ENCODE measurements at regions of chr13 and their contacts with region 1.

Region 1: GRCh38 chr13:91557328-91558090 is 159.1 kb downstream of the GPC5 start:
- DNase-seq: no peak
- ATAC-seq: no peak
- H3K4me3 ChIP-seq: no peak overlapping the region
- H3K27ac ChIP-seq: no peak overlapping the region
- H3K4me1 ChIP-seq: no peaks in the 10 kb centered on the region
- H3K27me3 ChIP-seq: no peaks in the 10 kb centered on the region
- CTCF ChIP-seq: no peak
- EP300 ChIP-seq: no peak
- POLR2A ChIP-seq: no peak
- RAD21 ChIP-seq: no peak

Region 2: DNA sequence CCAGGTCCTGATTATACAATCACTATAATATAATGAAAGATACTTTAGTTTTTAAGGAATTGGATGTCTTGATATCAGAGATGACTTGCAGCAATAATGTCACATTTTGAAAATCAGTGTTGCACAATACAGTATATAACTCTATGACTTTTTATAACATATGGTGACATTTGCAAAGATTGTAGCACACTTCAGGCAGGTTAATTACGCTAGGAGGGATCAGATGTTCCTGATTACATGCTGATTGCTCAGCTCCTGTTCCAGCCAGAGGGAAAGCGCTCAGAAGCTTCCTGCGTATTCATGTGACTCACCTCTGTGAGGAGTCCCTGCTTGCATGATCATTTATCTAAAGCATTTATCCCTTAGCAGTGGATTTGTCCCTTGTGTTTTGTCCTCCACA is 106.5 kb after region 1 on chr13:
- CTCF ChIA-PET with region 1: no interaction called
- POLR2A ChIA-PET with region 1: no interaction called
- in situ Hi-C with region 1: no loop called
- intact Hi-C with region 1: no loop called
- DNase-seq: no peak
- ATAC-seq: no peak
- H3K4me3 ChIP-seq: no peak overlapping the region
- H3K27ac ChIP-seq: no peak overlapping the region
- H3K4me1 ChIP-seq: no peaks in the 10 kb centered on the region
- H3K27me3 ChIP-seq: no peaks in the 10 kb centered on the region
- CTCF ChIP-seq: no peak
- EP300 ChIP-seq: no peak
- POLR2A ChIP-seq: no peak
- RAD21 ChIP-seq: no peak

Region 3: GRCh38 chr13:93480553-93481106 is 1923.1 kb after region 1 on chr13:
- CTCF ChIA-PET with region 1: no interaction called
- POLR2A ChIA-PET with region 1: no interaction called
- in situ Hi-C with region 1: no loop called
- intact Hi-C with region 1: loop called (anchors 10 kb)
- DNase-seq: peak; percentile 28
- ATAC-seq: peak; percentile 87
- H3K4me3 ChIP-seq: no peak overlapping the region
- H3K27ac ChIP-seq: no peak overlapping the region
- H3K4me1 ChIP-seq: 0 out of 2 replicates have a peak, but pooled peaks cover 6% of the 10 kb centered on the region
- H3K27me3 ChIP-seq: no peaks in the 10 kb centered on the region
- CTCF ChIP-seq: no peak
- EP300 ChIP-seq: no peak
- POLR2A ChIP-seq: no peak
- RAD21 ChIP-seq: no peak

Measured in HepG2 (cell line).